ENCODE measurements at regions of chr10 and their contacts with region 1.

Region 1: GRCh38 chr10:130136226-130137089 is at the start of gene GLRX3:
- DNase-seq: peak; percentile 73 to 88
- H3K4me3 ChIP-seq: peak within 1 kb of the TSS; percentile 83
- H3K4me1 ChIP-seq: peaks cover 29% of the 10 kb centered on the region
- H3K27me3 ChIP-seq: no peaks in the 10 kb centered on the region

Region 2: GRCh38 chr10:129963641-129964501 is 172.6 kb before region 1 on chr10 and contains the start of gene EBF3:
- in situ Hi-C with region 1: loop called (anchors 10 kb)
- DNase-seq: peak; percentile 81 to 93
- H3K4me3 ChIP-seq: peak within 1 kb of the TSS; percentile 49
- H3K4me1 ChIP-seq: peaks cover 26% of the 10 kb centered on the region
- H3K27me3 ChIP-seq: no peaks in the 10 kb centered on the region

Region 3: DNA sequence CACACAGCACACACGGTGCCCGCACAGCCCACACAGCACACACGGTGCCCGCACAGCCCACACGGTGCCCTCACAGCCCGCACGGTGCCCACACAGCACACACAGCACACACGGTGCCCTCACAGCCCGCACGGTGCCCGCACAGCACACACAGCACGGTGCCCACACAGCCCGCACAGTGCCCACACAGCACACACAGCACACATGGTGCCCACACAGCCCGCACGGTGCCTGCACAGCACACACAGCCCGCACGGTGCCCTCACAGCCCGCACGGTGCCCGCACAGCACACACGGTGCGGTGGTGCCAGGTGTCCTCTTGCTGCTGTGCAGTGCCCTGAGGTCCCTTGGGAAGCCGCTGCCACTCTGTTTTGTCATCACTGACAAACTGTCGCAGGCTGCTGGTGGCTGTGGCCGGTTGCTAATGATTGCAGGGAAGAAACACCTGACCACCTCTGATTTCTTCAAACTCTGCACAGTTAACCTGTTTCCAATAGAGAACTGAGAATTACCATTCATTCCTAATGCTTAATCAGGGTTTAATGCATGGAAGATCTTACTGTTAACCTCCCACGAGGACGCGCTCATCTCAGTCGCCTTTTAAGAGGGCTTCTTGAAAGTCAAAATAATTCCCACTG is 66.6 kb after region 1 on chr10:
- in situ Hi-C with region 1: no loop called
- DNase-seq: no peak
- H3K4me3 ChIP-seq: no peak overlapping the region
- H3K4me1 ChIP-seq: no peaks in the 10 kb centered on the region
- H3K27me3 ChIP-seq: no peaks in the 10 kb centered on the region

Region 4: DNA sequence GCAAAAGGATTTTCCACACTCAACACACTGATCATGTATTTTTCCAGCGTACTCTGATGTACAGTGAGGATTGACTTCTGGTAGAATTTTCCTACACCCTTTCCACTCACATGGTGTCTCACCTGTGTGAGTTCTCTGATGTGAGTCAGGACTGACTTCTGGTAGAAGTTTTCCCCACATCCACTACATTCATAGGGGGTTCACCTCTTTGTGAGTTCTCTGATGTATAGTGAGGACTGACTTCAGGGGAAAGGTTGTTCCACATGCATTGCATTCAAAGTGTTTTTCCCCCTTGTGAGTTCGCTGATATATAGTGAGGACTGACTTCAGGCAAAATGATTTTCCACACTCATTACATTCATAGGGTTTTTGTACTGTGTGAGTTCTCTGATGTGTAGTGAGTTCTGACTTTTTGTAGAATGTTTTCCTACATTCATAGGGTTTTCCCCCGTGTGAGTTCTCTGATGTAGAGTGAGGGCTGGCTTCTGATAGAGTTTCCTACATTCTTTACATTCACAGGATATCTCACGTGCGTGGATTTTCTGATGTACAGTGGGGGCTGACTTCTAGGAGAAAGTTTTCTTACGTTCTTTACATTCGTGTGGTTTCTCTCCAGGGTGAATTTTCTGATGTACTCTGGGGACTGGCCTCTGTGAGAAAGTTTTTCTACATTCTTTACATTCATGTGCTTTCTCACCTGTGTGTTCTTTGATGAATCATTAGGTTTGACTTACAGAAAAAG is 146.2 kb after region 1 on chr10:
- in situ Hi-C with region 1: no loop called
- DNase-seq: no peak
- H3K4me3 ChIP-seq: no peak overlapping the region
- H3K4me1 ChIP-seq: no peaks in the 10 kb centered on the region
- H3K27me3 ChIP-seq: no peaks in the 10 kb centered on the region

Region 5: DNA sequence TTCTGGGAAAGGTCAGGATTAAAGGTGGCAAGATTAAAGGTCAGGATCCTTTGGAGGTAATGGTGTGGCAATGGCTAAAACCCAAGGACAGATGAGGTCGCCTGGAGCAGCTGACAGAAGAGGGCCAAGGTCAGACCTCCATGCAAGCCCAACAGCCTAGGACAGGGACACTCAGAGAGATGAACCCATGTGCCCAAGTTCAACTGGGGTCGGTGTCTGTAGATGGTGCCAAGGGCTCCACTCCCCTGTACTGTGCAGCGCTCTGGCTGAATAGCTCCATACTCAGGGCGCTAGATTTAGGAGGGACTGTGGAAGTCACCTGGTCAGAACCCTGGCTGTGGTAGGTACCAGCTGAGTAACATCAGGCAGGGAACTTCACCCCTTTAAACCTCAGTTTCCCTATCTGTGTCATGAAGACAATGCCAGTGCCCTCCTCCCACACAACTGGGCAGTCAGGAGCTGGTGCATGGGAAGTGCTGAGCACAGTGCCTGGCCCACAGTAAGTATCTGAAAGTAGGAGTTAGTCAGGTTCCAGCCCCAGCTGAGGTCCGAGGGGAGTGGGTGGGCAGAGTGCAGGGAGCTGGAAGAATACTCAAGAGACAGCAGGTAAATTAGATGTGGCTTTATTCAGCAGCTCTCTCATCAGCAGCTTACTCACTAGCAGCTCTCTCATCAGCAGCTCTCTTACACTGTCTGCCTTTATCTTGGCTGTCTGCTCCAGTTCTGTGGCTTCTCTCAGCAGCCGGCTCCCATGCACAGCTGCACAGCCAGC is 326.8 kb after region 1 on chr10:
- in situ Hi-C with region 1: no loop called
- DNase-seq: no peak
- H3K4me3 ChIP-seq: no peak overlapping the region
- H3K4me1 ChIP-seq: no peaks in the 10 kb centered on the region
- H3K27me3 ChIP-seq: no peaks in the 10 kb centered on the region